Pancreas (tissue), 10 donors: ENCODE measurements at regions of chrX and their contacts with region 1.

Region 1: GRCh38 chrX:10254741-10255140 is 98.0 kb downstream of the CLCN4 start:
- DNase-seq: peak in 1 of 6 donors; percentile 15
- ATAC-seq: peak in 3 of 4 donors; percentile 49 to 78 (median 60)
- H3K4me3 ChIP-seq: no peak overlapping the region
- H3K27ac ChIP-seq: no peak overlapping the region
- H3K4me1 ChIP-seq: no peaks in the 10 kb centered on the region
- H3K27me3 ChIP-seq: no peaks in the 10 kb centered on the region
- CTCF ChIP-seq: no peak

Region 2: GRCh38 chrX:10620121-10620699 is 365.5 kb after region 1 on chrX and contains the start of gene MID1:
- intact Hi-C with region 1: loop called in 1 of 3 experiments (anchors 10 kb)
- DNase-seq: peak; percentile 44 to 77 (median 64)
- ATAC-seq: peak; percentile 82 to 88 (median 84)
- H3K4me3 ChIP-seq: peak within 1 kb of the TSS; percentile 2 to 48 (median 19)
- H3K27ac ChIP-seq: peak within 1 kb of the TSS in 3 of 4 donors; percentile 18 to 62 (median 50)
- H3K4me1 ChIP-seq: peaks cover 0 to 9% (median 0%) of the 10 kb centered on the region in 3 donors
- H3K27me3 ChIP-seq: peaks cover 0 to 4% (median 0%) of the 10 kb centered on the region in 4 donors
- CTCF ChIP-seq: no peak
- total RNA-seq, gene MID1: 3.9 to 19.2 (median 5.3) TPM